WTC11 (cell line): ENCODE measurements at regions of chr16 and their contacts with region 1.

Region 1: DNA sequence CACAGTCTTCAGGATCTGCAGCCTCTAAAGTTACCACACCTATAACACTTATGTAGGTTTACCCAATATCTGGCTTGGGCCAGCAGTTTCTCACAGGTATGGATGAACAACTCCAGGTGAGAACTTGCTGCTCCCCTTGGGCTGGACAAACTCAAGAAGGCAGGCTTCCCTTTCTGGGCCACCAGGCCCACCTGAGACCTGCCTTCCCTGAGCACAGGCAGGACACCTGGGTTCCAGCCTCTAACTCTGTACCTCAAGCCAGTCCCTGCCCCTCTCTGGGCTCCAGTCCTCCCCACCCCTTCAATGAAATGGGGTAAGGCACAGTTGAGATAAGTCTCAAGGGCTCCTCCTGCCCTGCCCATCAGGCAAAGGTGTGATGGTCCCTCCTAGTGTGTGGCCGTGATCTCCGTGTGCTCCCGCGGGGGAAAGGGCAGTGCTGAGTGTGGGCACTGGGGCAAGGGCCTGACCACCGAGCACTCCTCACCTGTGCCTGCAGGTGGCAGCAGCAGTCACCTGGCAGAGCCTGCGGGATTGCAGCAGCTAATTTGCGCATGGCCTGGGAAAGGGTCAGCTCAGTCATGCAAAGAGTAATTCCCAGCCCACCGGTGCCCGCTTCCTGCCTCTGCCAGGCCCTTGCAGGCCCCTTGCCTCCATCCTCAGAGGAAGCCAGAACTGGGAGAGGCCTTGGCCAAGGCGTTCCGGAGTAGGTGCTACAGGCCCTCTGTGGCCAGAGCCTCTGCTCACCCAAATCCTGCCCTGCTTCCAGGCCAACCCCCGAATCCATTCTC is 28.2 kb upstream of the ADGRG1 start:
- DNase-seq: peak; percentile 84
- ATAC-seq: peak; percentile 99
- H3K4me3 Mint-ChIP-seq: no peak overlapping the region
- H3K27ac Mint-ChIP-seq: no peak overlapping the region
- H3K4me1 Mint-ChIP-seq: no peaks in the 10 kb centered on the region
- H3K27me3 Mint-ChIP-seq: peaks cover 7% of the 10 kb centered on the region; the same call in 1 of the 2 replicates
- CTCF ChIP-seq: peak; percentile 77

Region 2: DNA sequence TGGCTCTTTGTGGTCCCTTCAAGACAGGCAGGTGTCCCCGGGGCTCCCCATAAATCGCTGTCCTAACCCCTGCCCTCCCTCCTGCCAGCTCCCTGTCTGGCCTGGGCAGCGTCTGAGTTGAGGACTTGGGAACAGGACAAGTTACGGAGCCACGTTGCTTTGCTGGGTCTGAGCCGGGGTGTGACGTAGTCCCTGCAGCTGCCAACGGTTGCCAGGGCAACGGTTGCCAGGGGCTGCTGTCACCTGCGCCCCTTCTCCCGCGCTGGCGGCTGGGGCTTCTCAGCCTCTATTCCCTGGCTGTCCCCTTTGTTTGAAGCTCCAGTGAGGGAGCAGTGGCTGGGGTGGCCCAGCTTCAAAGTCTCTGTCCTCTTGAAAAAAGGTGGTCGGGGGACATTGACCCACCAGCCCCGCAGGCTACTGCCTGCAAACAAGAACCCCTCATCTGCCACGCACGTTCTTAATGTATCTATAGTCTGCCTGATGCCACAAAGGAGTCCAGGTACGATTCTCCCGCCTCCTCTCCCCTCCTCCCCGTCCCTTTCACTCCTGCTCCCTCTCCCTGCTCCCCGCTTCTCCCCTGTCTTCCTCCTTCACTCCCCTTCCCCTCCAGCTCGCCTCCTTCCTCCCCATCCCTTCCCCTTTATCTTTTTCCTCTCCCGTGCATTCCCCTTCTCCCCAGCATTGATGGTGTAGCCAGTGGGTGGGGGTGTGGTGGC is 39.1 kb after region 1 on chr16:
- CTCF ChIA-PET with region 1: interaction called, 13 read pairs
- POLR2A ChIA-PET with region 1: no interaction called
- DNase-seq: peak; percentile 75
- ATAC-seq: peak; percentile 85
- H3K4me3 Mint-ChIP-seq: no peak overlapping the region
- H3K27ac Mint-ChIP-seq: no peak overlapping the region
- H3K4me1 Mint-ChIP-seq: no peaks in the 10 kb centered on the region
- H3K27me3 Mint-ChIP-seq: peaks cover 7% of the 10 kb centered on the region; the same call in 1 of the 2 replicates
- CTCF ChIP-seq: no peak